ENCODE measurements at regions of chr4 and their contacts with region 1.

Region 1: GRCh38 chr4:168710353-168710946 is 213.6 kb downstream of the PALLD start:
- DNase-seq: peak; percentile 27
- ATAC-seq: no peak
- H3K4me3 ChIP-seq: no peak overlapping the region
- H3K27ac ChIP-seq: no peak overlapping the region
- H3K4me1 ChIP-seq: no peaks in the 10 kb centered on the region
- H3K27me3 ChIP-seq: no peaks in the 10 kb centered on the region
- CTCF ChIP-seq: peak; percentile 59

Region 2: DNA sequence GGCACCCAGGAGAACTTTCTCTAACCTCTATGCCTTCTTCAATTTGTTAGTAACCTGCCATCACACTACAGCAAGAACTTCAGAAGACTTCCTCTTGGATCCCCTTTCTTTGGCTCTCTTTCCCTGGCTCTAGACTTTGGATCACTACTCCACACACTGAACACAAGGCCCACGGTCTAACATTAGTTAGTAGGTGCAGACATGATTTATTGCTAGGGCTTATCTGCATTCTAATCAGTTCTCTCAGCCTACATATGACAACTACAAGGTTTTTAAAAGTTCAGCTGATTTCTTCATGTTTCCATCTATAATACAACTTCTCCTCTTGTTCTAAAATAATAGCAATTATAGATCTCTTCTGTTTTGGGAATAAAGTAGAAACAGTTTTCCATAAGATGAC is 827.2 kb before region 1 on chr4:
- CTCF ChIA-PET with region 1: no interaction called
- POLR2A ChIA-PET with region 1: no interaction called
- in situ Hi-C with region 1: no loop called
- intact Hi-C with region 1: no loop called
- DNase-seq: no peak
- ATAC-seq: no peak
- H3K4me3 ChIP-seq: no peak overlapping the region
- H3K27ac ChIP-seq: no peak overlapping the region
- H3K4me1 ChIP-seq: no peaks in the 10 kb centered on the region
- H3K27me3 ChIP-seq: no peaks in the 10 kb centered on the region
- CTCF ChIP-seq: no peak

Region 3: DNA sequence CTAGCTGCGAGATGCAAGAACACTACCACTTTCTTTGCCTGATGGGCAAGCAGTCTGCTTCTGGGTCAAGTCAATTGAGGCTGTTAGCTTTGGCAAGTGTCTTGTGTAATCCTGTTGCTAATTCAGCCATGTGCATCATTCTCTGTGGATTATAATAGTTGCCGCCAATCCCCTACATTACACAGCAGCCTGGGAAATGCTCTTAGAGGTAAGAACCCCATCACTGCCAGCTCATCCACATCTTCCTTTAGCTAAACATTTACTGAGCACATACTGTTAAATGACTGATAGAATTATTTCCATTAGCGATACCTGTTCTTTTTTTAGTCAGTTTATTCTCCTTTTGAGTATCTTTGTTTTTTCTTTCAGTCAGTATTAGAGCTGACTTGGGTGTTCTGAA is 183.4 kb after region 1 on chr4:
- CTCF ChIA-PET with region 1: no interaction called
- POLR2A ChIA-PET with region 1: no interaction called
- in situ Hi-C with region 1: no loop called
- intact Hi-C with region 1: loop called (anchors 10 kb)
- DNase-seq: no peak
- ATAC-seq: no peak
- H3K4me3 ChIP-seq: no peak overlapping the region
- H3K27ac ChIP-seq: no peak overlapping the region
- H3K4me1 ChIP-seq: no peaks in the 10 kb centered on the region
- H3K27me3 ChIP-seq: no peaks in the 10 kb centered on the region
- CTCF ChIP-seq: no peak